PC-3 (cell line): ENCODE measurements at regions of chrX and their contacts with region 1.

Region 1: GRCh38 chrX:137051978-137052642 is 18.3 kb upstream of the GPR101 start:
- DNase-seq: peak; percentile 68
- ATAC-seq: peak; percentile 96
- H3K4me3 ChIP-seq: peak overlapping the region; percentile 69
- H3K27ac ChIP-seq: no peak overlapping the region
- H3K4me1 ChIP-seq: 0 out of 2 replicates have a peak, but pooled peaks cover 3% of the 10 kb centered on the region
- H3K27me3 ChIP-seq: peaks cover 17% of the 10 kb centered on the region; the same call in 1 of the 2 replicates
- CTCF ChIP-seq: peak; percentile 85

Region 2: GRCh38 chrX:136953867-136954787 is 98.0 kb before region 1 on chrX:
- CTCF ChIA-PET with region 1: no interaction called
- POLR2A ChIA-PET with region 1: no interaction called
- intact Hi-C with region 1: loop called (anchors 1 kb)
- DNase-seq: peak; percentile 88
- ATAC-seq: peak; percentile 94
- H3K4me3 ChIP-seq: no peak overlapping the region
- H3K27ac ChIP-seq: no peak overlapping the region
- H3K4me1 ChIP-seq: no peaks in the 10 kb centered on the region
- H3K27me3 ChIP-seq: no peaks in the 10 kb centered on the region
- CTCF ChIP-seq: peak; percentile 66

Region 3: GRCh38 chrX:137031517-137032340 is 20.4 kb before region 1 on chrX:
- CTCF ChIA-PET with region 1: no interaction called
- POLR2A ChIA-PET with region 1: no interaction called
- intact Hi-C with region 1: no loop called
- DNase-seq: peak; percentile 48
- ATAC-seq: peak; percentile 76
- H3K4me3 ChIP-seq: peak overlapping the region; percentile 66
- H3K27ac ChIP-seq: no peak overlapping the region
- H3K4me1 ChIP-seq: peaks cover 10% of the 10 kb centered on the region
- H3K27me3 ChIP-seq: peaks cover 66% of the 10 kb centered on the region
- CTCF ChIP-seq: no peak

Region 4: DNA sequence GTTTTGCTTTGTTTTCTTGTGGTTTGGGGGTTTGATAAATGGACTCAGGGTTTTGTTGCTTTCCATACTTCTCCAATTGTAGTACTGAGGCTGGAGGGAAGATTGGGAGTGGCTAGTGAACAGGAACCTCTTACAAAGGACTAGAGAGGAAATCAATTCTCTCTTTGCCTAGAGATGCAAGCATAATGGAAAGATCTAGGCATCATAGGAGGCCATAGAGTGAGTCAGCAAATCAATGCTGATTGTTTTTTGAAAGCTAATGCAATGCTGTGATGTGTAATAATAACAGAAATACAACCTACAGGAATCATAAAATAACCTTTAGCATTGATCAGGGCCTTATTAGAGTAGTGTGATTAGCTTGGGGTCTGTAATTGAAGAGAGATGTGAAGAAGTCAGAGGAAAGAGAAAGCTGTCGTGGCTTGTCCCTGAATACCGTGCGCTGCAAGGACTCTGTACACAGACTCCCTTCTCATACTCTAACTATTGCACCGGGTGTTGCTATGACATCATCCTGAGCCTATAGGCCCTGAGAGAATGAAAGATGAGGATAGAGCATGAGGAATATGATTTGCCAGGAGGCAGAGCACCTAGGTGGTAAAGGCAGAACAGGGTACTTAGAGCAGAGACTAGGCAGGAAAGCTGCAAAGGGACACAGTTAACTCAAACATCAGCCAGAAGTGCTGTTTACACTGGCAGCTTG is 11.0 kb after region 1 on chrX:
- CTCF ChIA-PET with region 1: no interaction called
- POLR2A ChIA-PET with region 1: no interaction called
- intact Hi-C with region 1: no loop called
- DNase-seq: no peak
- ATAC-seq: no peak
- H3K4me3 ChIP-seq: no peak overlapping the region
- H3K27ac ChIP-seq: no peak overlapping the region
- H3K4me1 ChIP-seq: no peaks in the 10 kb centered on the region
- H3K27me3 ChIP-seq: no peaks in the 10 kb centered on the region
- CTCF ChIP-seq: no peak